HAP-1 (cell line): ENCODE measurements at regions of chr12 and their contacts with region 1.

Region 1: DNA sequence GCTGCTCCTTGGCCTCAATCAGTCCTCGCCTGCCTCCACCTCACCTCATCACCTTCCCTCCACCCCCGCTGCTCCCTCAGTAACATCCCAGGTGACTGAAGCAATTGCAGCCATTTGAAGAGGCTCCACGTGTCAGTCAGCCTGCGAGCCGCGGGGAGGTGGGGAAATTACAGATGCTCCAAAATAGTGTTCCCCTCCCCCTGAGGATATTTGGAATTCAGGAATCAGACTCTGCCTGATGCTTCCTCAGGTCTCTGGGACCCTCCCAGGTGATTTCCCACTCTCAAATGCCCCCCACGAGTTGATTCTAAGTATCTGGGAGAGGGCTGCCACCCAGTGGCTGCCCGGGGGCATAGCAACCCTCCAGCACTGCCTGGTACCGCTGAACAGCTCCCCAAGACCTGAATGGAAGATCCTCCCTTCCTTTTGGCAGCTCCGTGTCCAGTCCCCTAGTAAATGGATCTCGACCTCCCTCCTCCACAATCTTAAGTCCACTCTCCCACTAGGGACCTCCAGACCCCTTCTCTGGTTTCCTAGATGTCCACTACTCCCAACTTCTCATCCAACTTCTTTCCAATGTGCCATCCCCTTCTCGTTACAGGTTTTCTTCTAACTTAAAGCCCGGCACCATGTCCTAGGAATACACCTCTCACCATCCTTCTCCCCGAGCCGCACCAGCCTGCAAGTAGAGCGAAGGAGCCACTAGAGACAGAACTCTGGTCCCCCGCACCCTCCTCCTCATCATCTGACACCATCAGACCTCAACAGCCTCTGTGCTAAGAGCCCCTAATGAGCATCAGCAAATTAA is 1.4 kb upstream of the ASIC1 start:
- DNase-seq: peak; percentile 25 to 66
- H3K4me3 ChIP-seq: no peak overlapping the region
- H3K4me1 ChIP-seq: peaks cover 5% of the 10 kb centered on the region
- H3K27me3 ChIP-seq: no peaks in the 10 kb centered on the region

Region 2: DNA sequence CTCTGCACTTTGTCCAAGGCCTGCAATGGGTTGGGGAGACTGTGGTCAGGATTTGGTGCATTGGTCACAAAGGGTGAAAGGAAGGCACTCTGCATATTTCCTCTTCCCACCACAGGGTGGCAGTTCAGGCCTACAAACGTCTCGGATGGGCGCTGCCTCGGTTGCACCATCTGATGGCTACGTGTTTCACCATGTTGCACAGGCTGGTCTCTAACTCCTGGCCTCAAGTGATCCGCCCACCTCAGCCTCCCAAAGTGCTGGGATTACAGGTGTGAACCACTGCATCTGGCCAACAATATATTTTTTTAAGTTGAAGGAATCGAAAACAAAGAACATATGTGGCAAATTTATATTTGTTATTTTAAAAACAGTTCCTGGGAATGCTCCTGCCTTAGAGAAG is 279.6 kb before region 1 on chr12:
- in situ Hi-C with region 1: loop called (anchors 10 kb)
- DNase-seq: peak; percentile 60 to 81
- H3K4me3 ChIP-seq: no peak overlapping the region
- H3K4me1 ChIP-seq: no peaks in the 10 kb centered on the region
- H3K27me3 ChIP-seq: no peaks in the 10 kb centered on the region